Left cardiac atrium (tissue), 4 donors: ENCODE measurements at regions of chr1 and their contacts with region 1.

Region 1: DNA sequence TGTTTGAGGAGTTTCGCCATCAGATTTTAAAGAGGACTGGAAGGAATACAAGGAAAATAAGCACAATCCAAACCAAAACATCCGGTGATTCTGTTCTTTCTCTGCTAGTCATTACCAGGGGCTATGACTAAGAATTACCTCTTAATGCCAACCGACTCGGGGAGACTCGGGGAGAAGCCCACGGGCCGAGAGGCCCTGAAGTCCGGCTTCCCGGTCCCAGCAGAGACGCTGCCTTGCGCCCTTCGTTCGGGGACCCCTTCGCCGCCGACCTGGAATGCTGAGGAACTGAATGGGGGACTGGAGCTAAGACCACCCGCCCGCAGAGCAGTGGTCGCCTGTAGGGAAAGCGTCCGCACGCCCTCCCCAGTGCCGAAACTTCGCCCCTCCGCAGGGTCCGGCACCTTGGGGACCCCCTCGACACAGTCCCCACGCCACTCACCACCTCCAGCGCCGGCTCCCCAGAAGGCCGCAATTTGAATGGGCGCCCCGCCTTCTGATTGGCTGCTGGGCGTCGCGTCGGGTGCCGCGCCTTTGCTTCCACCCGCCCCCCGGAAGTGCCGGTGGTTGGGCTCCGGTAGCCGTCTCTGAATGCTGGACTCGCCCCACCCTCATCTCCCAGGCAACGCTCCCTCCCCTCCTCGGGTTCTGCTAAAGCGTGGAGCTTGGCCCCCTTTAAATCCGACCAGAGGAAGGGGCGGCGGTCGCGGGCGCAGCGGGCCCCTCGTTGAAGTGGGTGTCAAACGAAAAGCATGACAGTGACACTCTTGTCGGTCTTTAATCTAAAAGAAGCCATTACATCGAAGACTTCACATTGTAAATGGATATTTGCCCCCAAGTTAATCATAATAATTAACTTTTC is at the start of gene KIF14:
- DNase-seq: peak; percentile 95
- ATAC-seq: peak; percentile 99 to 100
- total RNA-seq, gene KIF14: 0.05 to 0.27 TPM

Region 2: GRCh38 chr1:200226268-200226968 is 394.1 kb before region 1 on chr1:
- intact Hi-C with region 1: no loop called
- DNase-seq: no peak
- ATAC-seq: no peak

Region 3: DNA sequence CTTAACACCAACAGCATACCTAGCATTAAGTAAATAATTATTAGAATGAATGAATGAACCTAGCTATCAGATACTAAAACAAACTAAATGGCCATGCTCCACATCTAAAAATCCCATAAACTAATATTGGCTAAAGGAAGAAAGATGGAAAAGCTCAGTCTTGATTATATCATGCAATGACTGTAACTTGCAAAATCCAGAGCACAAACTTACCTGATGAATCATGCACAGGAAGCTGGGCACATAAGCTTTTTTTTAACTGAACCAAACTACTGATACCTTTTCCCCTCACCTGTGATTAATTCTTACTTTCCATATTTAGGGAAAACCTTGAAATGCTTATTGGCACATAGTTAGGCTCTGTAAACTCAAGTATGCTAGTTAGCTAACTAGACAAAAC is 70.1 kb before region 1 on chr1:
- intact Hi-C with region 1: no loop called
- DNase-seq: no peak
- ATAC-seq: no peak

Region 4: DNA sequence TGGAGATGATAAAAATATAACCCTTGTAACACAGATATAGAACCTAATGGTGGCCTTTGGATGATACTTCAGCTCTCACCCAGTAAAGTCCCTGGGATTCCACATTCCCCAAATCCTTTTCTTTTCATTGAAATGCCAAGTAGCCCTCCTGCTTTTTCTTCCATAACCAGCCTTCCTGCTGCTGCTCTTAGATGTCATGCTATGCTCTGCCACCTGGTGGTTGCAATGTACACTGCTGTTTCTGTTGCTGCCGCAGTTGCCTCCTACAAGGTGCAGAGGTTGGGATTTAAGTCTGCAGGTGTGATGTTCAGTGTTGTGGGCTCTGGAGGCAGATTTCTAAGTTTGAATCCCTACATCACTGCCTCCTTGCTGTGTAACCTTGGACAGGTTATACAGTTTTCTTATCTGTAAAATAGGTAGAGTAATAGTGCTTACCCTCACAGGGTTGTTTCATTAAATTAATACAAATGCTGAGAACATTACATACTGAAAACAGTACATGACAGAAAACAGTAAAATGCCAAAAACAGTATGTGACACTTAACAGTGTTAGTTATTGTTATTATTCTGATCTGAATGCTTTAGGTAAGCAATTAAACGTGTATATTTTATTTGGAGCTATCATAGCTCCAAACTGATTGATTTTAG is 182.5 kb after region 1 on chr1:
- intact Hi-C with region 1: loop called (anchors 2 to 5 kb)
- DNase-seq: peak; percentile 77
- ATAC-seq: peak; percentile 80 to 91

Region 5: GRCh38 chr1:200837931-200838571 is 217.5 kb after region 1 on chr1:
- intact Hi-C with region 1: loop called in 1 of 2 experiments (anchors 2 kb)
- DNase-seq: no peak
- ATAC-seq: no peak